ENCODE measurements at regions of chr3 and their contacts with region 1.

Region 1: DNA sequence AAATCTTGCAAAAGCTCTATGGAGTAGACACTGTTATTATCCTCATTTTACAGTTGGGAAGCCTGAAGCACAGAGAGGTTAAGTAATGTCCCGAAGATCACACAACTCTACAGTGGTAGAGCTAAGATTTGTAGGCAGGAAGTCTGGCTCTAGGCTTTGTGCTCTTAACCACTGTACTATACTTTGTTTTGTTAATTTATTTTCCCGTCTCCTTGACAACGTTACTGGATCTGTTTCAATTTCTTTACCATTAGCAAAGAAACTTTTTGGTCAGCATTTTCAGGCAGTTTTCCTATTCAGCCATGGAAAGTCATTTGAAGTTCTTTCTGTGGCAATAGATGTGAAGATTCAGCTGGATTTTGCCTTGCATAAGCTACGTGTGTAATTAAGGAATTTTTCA is 51.7 kb downstream of the OTOL1 start:
- DNase-seq: no peak
- H3K4me3 ChIP-seq: no peak overlapping the region
- H3K27ac ChIP-seq: no peak overlapping the region
- H3K4me1 ChIP-seq: no peaks in the 10 kb centered on the region
- H3K27me3 ChIP-seq: no peaks in the 10 kb centered on the region
- CTCF ChIP-seq: no peak

Region 2: DNA sequence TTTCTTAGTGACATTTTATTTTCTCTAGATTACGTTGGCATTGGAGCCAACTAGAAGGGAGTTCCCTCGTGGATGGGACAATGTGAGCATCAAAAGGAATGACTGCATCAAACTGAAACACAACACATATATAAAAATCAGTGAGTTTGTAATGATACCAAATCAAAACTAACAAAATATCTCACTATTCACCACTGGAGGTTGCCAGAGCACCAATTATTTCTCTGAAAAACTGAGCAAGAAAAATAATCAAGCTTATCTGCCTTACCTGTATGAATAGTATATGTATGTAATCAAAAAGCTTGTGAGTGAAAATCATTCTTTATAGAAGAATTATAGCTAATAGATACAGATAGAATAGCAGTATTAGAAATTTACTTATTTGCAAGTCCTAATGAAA is 98.5 kb before region 1 on chr3:
- CTCF ChIA-PET with region 1: no interaction called
- POLR2A ChIA-PET with region 1: no interaction called
- intact Hi-C with region 1: loop called (anchors 5 kb)
- DNase-seq: no peak
- H3K4me3 ChIP-seq: no peak overlapping the region
- H3K27ac ChIP-seq: no peak overlapping the region
- H3K4me1 ChIP-seq: no peaks in the 10 kb centered on the region
- H3K27me3 ChIP-seq: no peaks in the 10 kb centered on the region
- CTCF ChIP-seq: 0 out of 2 replicates have a peak, but pooled peaks have one; percentile 29

Region 3: GRCh38 chr3:163306405-163306804 is 1758.1 kb after region 1 on chr3:
- CTCF ChIA-PET with region 1: interaction called, 11 read pairs
- POLR2A ChIA-PET with region 1: no interaction called
- intact Hi-C with region 1: no loop called
- DNase-seq: no peak
- H3K4me3 ChIP-seq: no peak overlapping the region
- H3K27ac ChIP-seq: no peak overlapping the region
- H3K4me1 ChIP-seq: no peaks in the 10 kb centered on the region
- H3K27me3 ChIP-seq: no peaks in the 10 kb centered on the region
- CTCF ChIP-seq: no peak

Measured in PC-9 (cell line).